Common myeloid progenitor, CD34-positive (primary cell): ENCODE measurements at regions of chr1 and their contacts with region 1.

Region 1: DNA sequence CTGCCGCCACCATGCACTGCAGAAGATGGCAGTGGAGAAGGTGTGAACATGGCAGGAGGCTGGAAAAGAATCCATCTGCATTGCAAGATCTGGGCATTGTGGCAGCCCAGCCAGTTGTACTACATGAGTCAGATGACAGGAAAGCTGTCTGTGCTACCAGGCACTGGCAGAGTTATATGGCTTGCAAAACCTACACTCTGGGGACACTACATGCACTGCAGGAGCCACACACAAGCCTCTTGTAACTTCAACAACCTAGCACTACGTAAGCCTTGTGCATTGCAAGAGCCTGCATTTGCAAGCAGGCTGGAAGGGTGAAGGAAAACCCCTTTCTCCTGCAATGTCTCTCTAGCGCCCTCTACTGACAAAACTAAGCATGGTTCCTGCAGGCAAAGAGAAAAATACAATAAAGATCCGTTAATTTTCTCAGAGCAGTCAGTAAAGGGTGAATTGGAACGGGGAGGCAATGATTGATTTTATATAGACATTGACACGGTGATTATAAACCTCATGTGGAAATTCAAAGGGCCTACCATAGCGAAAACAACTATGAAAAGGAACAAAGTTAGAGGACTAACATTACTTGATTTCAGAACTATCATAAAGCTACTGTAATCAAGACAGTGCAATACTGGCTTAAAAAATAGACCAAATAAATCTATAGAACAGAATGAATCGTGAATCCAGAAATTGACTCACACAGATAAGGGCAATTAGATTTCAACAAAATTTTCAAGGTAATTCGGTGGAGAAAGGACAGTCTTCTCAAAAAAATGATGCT is 26.2 kb upstream of the DYNLT5 start:
- DNase-seq: peak; percentile 76 to 91 (median 90)
- H3K4me3 ChIP-seq: no peak overlapping the region
- H3K27ac ChIP-seq: no peak overlapping the region
- H3K4me1 ChIP-seq: peaks cover 5 to 50% (median 34%) of the 10 kb centered on the region in 4 experiments
- H3K27me3 ChIP-seq: no peaks in the 10 kb centered on the region

Region 2: DNA sequence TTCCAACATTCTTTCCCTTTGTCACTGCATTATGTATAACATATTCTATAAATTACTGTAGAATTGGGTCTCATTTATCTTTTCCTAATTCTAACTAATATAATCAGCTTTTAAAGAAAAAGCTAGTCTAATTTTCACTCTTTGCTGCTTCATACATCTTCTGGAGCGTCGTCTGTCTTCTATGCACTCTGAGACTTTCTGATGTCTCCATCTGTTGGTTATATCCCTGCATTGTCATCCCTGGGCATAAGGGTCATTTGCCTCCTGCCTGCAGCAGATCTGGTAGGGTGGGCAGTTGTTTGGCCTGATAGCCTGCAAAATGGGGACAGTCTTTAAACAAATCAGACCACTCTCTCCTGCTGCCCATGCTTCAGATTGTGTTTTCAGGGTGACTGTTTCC is 14.7 kb before region 1 on chr1:
- CTCF ChIA-PET with region 1: interaction called, 25 read pairs
- POLR2A ChIA-PET with region 1: no interaction called
- DNase-seq: peak in 1 of 3 donors; percentile 24
- H3K4me3 ChIP-seq: no peak overlapping the region
- H3K27ac ChIP-seq: no peak overlapping the region
- H3K4me1 ChIP-seq: no peaks in the 10 kb centered on the region
- H3K27me3 ChIP-seq: no peaks in the 10 kb centered on the region

Region 3: GRCh38 chr1:66752000-66752592 is 26.0 kb after region 1 on chr1 and contains the start of gene DYNLT5:
- CTCF ChIA-PET with region 1: interaction called, 51 read pairs
- POLR2A ChIA-PET with region 1: interaction called, 4 read pairs
- DNase-seq: peak in 2 of 3 donors; percentile 58 to 59
- H3K4me3 ChIP-seq: peak within 1 kb of the TSS; percentile 52 to 92 (median 76)
- H3K27ac ChIP-seq: peak within 1 kb of the TSS; percentile 77 to 90
- H3K4me1 ChIP-seq: peaks cover 24 to 69% (median 43%) of the 10 kb centered on the region in 4 experiments
- H3K27me3 ChIP-seq: no peaks in the 10 kb centered on the region